OCI-LY7 (cell line): ENCODE measurements at regions of chr12 and their contacts with region 1.

Region 1: DNA sequence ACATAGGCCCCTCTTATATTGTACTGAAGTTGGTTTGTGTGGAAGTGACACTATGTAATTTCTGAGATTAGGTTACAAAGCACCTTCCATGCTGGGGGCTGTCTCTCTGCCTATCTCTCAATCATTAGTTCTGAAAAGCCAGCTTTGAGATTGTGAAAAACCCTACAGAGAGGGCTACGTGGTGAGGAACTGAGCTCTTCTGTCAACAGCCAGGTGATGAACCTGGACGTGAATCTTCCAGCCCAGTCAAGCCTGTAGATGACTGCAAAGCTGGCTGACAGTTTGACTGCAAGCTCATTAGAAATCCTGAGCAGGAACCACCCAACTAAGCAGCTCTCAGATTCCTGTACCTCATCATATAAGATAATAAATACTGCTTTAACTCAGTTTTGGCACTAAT is 36.3 kb upstream of the BBS10 start:
- DNase-seq: no peak
- H3K4me3 ChIP-seq: no peak overlapping the region
- H3K27ac ChIP-seq: no peak overlapping the region
- H3K4me1 ChIP-seq: no peaks in the 10 kb centered on the region
- CTCF ChIP-seq: no peak

Region 2: DNA sequence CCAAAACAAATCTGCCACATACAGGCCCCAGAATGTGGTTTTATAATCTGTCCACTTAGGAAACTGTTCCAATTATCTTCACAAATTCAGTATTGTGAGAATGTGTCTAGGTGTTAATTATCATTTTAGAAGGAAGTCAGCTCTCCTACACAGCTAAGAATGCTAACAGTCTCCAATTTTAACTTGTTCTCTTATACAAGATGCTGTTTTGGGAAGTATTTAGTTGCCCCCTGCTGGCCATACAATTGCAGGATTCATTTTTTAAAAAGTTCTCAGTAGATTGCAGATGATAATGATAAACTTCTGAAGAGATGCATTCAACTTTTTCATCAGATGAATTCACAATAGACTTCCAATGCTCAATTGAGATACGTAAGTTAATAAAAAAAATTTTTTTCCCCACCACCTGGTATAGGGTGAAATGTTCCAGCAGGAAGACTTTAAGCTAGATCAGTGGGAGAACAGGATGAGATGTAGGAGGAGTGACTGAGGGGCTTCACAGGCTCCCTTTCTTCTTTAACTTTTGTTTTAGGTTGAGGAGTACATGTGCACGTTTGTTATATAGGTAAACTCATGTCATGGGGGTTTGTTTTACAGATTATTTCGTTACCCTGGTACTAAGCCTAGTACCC is 202.3 kb after region 1 on chr12:
- CTCF ChIA-PET with region 1: no interaction called
- POLR2A ChIA-PET with region 1: no interaction called
- intact Hi-C with region 1: loop called (anchors 10 kb)
- DNase-seq: peak; percentile 62
- H3K4me3 ChIP-seq: no peak overlapping the region
- H3K27ac ChIP-seq: no peak overlapping the region
- H3K4me1 ChIP-seq: no peaks in the 10 kb centered on the region
- CTCF ChIP-seq: peak; percentile 95

Region 3: DNA sequence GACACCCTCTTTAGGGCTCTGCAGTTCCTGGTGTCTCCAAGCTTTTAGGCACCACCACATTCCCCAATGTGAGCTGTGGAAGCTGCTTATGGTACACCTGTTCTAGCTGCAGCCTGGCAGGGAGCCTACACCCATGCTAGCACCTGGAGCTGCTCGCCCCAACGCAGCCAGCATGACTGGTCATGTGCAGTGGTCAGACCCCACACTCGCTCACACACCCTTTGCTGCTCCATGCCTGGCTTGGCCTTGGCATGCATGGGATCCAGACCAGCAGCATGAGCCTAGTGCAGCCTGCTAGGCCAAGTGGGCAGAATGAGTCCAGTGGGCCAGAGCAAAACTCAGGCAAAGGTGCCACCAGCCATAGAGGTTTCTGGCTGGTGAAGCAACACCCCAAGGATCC is 261.4 kb after region 1 on chr12:
- CTCF ChIA-PET with region 1: no interaction called
- POLR2A ChIA-PET with region 1: no interaction called
- intact Hi-C with region 1: no loop called
- DNase-seq: no peak
- H3K4me3 ChIP-seq: no peak overlapping the region
- H3K27ac ChIP-seq: no peak overlapping the region
- H3K4me1 ChIP-seq: no peaks in the 10 kb centered on the region
- CTCF ChIP-seq: no peak